Mucosa of descending colon (tissue), 3 donors: ENCODE measurements at regions of chr1 and their contacts with region 1.

Region 1: DNA sequence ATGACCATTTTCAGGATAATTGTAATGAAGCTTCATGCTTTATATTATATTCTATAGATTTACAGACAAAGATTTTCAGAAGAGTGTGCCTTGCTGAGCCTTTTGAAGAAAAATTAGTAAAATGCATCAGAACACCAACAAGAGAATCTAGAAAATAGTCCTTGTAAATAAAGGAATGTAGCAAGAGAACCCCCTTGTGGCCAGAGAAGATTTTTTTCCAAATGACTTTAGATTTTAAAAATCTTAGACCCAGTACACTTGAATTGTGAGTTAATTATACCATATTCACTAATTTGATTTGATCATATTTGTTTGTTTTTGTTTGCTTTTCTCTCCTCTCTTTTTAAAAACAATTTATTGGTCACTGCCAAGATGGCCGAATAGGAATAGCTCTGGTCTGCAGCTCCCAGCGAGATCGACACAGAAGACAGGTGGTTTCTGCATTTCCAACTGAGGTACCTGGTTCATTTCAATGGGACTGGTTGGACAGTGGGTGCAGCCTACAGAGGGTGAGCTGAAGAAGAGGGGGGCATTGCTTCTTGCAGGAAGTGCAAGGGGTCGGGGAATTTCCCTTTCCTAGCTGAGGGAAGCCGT is 12.8 kb upstream of the IFI44L start:
- DNase-seq: peak in 2 of 3 donors; percentile 20 to 29
- ATAC-seq: no peak
- H3K4me3 ChIP-seq: no peak overlapping the region
- H3K4me1 ChIP-seq: no peaks in the 10 kb centered on the region
- CTCF ChIP-seq: no peak

Region 2: GRCh38 chr1:78132174-78132947 is 475.1 kb before region 1 on chr1:
- intact Hi-C with region 1: loop called in 1 of 2 experiments (anchors 5 kb)
- DNase-seq: no peak
- ATAC-seq: no peak
- H3K4me3 ChIP-seq: no peak overlapping the region
- H3K4me1 ChIP-seq: no peaks in the 10 kb centered on the region
- CTCF ChIP-seq: no peak

Region 3: GRCh38 chr1:78145105-78145580 is 462.3 kb before region 1 on chr1:
- intact Hi-C with region 1: loop called in 1 of 2 experiments (anchors 2 kb)
- DNase-seq: peak in 2 of 3 donors; percentile 57 to 81
- ATAC-seq: peak; percentile 77
- H3K4me3 ChIP-seq: no peak overlapping the region
- H3K4me1 ChIP-seq: peaks cover 2% of the 10 kb centered on the region
- CTCF ChIP-seq: peak; percentile 71

Region 4: DNA sequence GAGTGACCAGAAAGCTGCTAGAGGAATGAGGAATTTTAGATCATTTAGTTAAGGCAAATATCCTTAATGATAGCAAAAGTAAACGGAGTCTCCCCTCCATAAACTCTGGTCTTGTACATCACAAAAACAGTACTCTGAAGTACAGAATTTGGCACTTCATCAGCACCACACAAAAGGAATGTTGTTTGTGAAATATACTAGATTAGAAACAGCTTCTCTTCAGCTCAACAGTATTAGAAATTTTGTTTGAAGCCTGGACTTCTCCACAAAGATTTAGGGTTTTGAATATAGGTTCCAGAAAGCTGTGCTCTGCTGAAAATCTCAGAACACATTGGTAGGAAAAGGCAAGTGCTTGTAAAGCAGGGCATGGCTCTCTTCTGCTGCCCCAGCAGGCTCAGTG is 251.8 kb before region 1 on chr1:
- intact Hi-C with region 1: no loop called
- DNase-seq: no peak
- ATAC-seq: no peak
- H3K4me3 ChIP-seq: no peak overlapping the region
- H3K4me1 ChIP-seq: no peaks in the 10 kb centered on the region
- CTCF ChIP-seq: no peak

Region 5: GRCh38 chr1:78682496-78682895 is 75.1 kb after region 1 on chr1:
- intact Hi-C with region 1: loop called in 1 of 2 experiments (anchors 5 kb)
- DNase-seq: no peak
- ATAC-seq: no peak
- H3K4me3 ChIP-seq: no peak overlapping the region
- H3K4me1 ChIP-seq: no peaks in the 10 kb centered on the region
- CTCF ChIP-seq: no peak